ENCODE measurements at regions of chr1 and their contacts with region 1.

Region 1: DNA sequence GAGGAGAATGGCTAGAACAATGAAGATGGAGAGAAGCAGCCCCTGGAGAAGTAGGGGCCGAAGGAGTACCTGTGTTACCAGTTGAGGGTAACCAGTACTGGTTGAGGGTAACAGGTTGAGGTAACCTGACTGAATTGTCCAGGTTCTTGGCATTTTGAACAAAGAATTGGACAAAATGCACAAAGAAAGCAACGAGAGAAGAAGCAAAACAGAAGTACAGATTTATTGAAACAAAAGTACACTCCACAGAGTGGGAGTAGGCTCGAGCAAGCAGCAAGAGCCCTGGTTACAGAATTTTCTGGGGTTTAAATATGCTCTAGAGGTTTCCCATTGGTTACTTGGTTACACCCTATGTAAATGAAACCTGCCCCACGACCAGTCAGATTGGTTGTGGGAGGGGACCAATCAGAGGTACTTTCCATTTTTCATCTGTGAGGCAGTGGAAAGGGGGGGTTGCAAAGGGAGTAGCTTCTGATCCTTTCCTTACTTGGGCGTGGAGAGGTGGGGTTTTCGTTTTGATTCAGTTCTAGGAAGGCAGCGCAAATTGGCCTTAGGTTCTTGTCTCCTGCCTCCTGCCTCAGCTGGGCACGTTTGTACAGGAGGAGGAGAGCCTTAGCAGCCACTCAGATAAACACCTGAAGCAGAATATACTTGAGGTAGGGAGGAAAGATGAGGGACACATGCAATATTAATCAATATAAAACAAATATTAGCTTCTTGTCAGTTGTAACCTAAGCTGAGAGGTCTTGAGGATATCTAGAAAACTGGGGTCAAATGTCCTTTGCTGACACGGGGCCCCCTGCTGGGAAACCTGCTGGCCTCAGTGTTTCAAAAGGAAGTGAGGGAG is 14.2 kb upstream of the LSM10 start:
- DNase-seq: no peak
- ATAC-seq: peak; percentile 42 to 64
- H3K4me3 ChIP-seq: no peak overlapping the region
- H3K27ac ChIP-seq: no peak overlapping the region
- H3K4me1 ChIP-seq: no peaks in the 10 kb centered on the region
- H3K27me3 ChIP-seq: no peaks in the 10 kb centered on the region
- CTCF ChIP-seq: no peak
- POLR2A ChIP-seq: no peak

Region 2: DNA sequence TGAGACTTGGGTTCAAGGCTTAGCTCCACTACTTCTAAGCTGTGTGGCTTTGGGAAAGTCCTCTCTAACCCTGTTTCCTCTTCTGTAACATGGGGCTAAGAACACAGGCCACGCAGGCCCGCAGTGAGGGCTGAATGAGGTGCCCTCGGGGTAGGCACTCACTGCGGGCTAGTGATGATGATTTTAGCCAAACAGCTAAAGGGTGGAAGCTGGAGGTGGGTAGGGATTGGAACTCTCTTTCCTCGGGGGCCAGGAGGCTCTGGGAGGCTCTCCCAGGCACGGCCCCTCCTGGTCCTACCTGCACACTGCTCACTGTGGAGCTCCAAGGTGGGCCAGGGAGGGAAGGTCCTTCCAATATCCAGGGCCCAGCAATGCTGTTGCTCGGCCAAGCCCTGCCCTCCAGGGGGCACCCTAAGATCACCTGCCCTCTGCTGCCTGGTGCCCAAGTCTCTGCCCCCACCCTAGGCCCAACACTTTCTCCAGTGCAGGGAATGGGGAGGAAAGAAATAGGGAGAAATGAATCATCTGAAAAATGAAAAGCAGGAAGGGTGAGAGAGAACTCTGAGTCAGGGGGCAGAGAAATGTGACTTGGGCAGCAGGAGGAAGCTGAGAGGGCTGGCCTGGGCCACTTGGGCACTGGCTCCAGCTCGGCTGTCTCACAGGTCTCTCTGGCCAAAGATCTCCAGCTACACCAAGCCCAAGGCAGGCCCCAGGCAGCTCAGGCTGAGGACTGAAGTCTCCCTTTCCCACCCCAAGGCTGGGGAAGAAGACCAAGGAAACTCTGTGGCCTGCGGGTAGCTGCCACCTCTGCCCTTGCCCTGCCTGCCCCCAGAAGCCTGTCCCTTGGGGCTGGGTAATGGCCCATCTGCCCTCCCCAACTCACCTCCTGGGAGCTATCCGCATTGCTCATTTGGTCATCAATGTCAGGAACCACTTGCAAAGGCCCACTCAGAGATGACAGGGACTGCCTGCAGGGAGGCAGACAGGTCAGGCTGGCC is 69.1 kb before region 1 on chr1:
- in situ Hi-C with region 1: loop called in 2 of 4 experiments (anchors 5 to 10 kb)
- intact Hi-C with region 1: no loop called
- DNase-seq: no peak
- ATAC-seq: peak in 1 of 2 donors; percentile 8
- H3K4me3 ChIP-seq: no peak overlapping the region
- H3K27ac ChIP-seq: peak overlapping the region; percentile 75 to 82 (median 78)
- H3K4me1 ChIP-seq: peaks cover 23 to 27% of the 10 kb centered on the region in 2 donors
- H3K27me3 ChIP-seq: no peaks in the 10 kb centered on the region
- CTCF ChIP-seq: peak; percentile 32 to 77 (median 72)
- POLR2A ChIP-seq: no peak

Region 3: DNA sequence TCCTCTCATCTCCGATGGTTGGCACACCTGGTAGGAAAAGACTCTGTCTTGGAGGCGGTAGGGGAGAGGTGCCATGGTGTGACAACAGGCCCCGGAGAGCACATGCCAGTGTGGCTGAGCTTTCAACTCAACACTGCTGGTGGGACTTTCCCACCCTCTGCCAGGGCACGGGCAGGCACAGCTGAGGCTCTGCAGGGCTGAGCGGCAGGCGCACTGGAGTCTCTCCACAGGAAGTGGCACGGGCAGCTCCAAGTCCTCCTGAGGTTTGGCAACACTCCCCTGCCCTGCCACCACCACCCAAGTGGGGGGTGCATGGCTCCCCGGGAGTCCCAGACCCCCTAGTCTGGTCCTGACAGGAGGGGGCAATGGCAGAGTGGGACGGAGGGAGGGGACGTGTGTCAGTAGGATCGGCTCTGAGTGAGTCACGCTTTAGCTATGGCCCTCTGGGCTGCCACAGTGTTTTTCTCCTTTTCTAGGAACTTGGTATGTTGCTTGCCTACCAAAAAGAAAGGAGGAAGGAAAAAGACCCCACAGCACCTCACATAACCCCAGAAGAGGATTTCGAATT is 61.2 kb before region 1 on chr1:
- in situ Hi-C with region 1: loop called in 3 of 4 experiments (anchors 5 to 10 kb)
- intact Hi-C with region 1: no loop called
- DNase-seq: peak in 1 of 2 donors; percentile 51
- ATAC-seq: peak in 1 of 2 donors; percentile 37
- H3K4me3 ChIP-seq: no peak overlapping the region
- H3K27ac ChIP-seq: peak overlapping the region; percentile 68 to 75 (median 72)
- H3K4me1 ChIP-seq: peaks cover 21 to 32% of the 10 kb centered on the region in 2 donors
- H3K27me3 ChIP-seq: no peaks in the 10 kb centered on the region
- CTCF ChIP-seq: no peak
- POLR2A ChIP-seq: no peak

Measured in gastrocnemius medialis (tissue), 4 donors.